HCT116 (cell line): ENCODE measurements at regions of chr9 and their contacts with region 1.

Region 1: DNA sequence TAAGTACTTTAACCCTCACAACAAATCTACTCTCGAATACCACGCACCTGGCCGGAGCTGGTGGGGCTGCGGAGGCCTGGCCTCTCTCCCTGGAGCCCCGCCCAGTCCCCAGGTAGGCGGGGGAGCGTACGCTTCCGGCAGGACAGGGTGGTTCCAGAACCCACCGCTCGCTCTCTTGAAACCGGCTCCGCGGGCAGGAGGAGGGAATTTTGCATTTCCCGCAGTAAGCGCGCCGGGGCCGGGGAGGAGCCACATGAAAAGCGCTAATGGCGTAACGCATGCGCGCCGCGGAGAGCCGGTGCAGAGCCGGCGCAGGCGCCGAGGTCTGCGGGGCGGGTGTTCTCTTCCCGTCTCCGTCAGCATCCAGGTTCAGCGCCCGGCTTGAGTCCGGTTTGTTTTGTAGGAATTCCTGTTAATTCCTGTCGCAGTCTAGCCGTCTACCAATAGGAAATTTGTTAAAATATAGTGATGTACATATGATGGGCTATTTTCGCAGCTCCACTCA is 20.8 kb downstream of the CAVIN4 start:
- DNase-seq: peak; percentile 75
- ATAC-seq: peak; percentile 89
- H3K4me3 ChIP-seq: peak overlapping the region; percentile 41 to 55
- H3K27ac ChIP-seq: peak overlapping the region; percentile 16
- H3K4me1 ChIP-seq: peaks cover 12 to 30% of the 10 kb centered on the region in 2 experiments
- H3K27me3 ChIP-seq: no peaks in the 10 kb centered on the region
- CTCF ChIP-seq: no peak
- POLR2A ChIP-seq: peak; percentile 73
- RAD21 ChIP-seq: no peak

Region 2: DNA sequence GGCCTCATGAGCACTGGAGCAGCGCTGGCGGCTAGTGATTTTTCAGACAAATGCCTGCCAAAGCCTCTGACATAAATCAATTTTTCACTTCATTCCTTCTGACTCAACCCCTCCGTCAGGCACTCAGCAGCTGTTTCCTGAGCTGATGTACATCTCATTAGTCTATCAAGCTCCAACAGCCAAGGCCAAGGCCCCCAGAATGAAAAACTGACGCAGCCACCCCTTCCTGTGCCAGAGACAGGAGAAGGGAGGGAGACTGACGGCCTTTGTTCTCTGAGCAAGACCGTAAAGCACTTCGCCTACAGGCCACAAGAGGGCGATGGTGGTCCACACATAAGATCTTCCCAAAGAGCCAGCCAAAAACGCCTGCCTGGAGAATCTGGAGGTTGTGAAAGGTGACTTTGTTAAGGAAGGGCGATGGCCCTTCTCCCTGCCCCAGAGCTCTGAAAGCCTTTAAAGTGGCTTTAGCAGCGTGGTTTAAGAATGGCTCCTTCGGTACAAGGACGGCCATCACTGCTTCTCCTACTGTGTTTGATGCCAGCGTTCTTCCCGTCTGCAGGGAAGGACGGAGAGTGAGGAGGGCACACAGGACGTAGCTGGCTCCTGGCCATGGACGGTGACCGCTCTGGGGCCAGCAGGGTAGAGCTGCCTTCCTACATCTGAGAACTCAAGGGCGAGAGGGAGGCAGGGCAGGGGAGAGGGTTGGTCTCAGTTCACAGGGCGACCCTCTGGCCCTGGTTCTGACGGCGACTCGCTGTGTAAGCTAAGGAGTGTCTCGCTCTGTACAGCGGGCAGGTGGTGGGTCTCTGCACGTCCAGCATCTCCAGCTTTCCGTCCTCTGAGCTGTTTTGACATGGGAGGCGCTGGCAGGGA is 1414.0 kb before region 1 on chr9:
- CTCF ChIA-PET with region 1: no interaction called
- POLR2A ChIA-PET with region 1: no interaction called
- RAD21 ChIA-PET with region 1: no interaction called
- intact Hi-C with region 1: loop called (anchors 1 kb)
- DNase-seq: peak; percentile 74
- ATAC-seq: peak; percentile 94
- H3K4me3 ChIP-seq: no peak overlapping the region
- H3K27ac ChIP-seq: no peak overlapping the region
- H3K4me1 ChIP-seq: peaks cover 0 to 4% of the 10 kb centered on the region in 2 experiments; a peak in 1 of 4 replicates
- H3K27me3 ChIP-seq: peaks cover 6% of the 10 kb centered on the region; the same call in 1 of the 2 replicates
- CTCF ChIP-seq: peak; percentile 66 to 94 (median 91)
- POLR2A ChIP-seq: no peak
- RAD21 ChIP-seq: peak; percentile 88

Region 3: DNA sequence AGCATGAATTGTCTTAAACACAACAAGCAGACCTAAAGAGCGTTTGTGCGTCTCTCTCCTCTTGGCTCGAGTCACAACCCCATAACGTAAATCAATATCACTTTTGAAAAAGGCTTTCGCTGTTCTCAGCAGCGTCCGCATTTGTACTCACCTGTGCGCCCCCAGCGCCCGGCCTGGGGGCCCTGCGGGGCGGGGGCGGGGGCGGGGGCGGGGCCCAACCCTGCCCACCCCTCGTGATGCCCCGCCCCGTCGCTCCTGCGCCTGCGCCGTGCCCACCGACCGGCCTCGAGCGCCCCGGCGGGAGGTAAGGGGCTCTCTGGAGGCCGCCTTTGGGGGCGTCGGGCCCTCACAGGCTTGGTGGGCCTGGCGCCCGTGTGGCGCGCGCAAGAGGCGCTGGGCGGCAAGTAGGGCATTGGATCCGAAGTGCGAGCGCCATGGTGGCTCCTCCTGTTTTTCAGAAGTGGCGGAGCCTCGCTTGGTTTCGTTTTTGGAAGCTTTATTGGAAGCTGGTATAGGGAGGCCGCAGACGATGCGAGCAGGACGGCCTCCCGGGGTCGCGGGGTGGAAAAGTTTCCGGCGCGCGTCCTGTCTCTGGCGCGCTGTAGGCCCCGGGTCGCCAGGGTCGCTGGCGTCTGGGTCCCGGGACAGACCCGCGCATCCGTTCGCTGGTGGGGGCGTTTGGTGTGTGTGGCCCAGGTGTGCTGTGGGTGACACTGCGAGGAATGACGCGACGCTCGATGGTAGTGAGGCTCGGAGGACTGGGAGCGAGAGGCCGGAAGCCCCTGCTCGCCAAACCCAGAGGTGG is 692.1 kb before region 1 on chr9 and contains the start of gene STX17:
- CTCF ChIA-PET with region 1: no interaction called
- POLR2A ChIA-PET with region 1: no interaction called
- RAD21 ChIA-PET with region 1: no interaction called
- intact Hi-C with region 1: loop called (anchors 5 kb)
- DNase-seq: peak; percentile 54
- ATAC-seq: peak; percentile 85
- H3K4me3 ChIP-seq: peak within 1 kb of the TSS; percentile 68 to 82
- H3K27ac ChIP-seq: peak within 1 kb of the TSS; percentile 79
- H3K4me1 ChIP-seq: peaks cover 3 to 16% of the 10 kb centered on the region in 2 experiments; a peak in 3 of 4 replicates
- H3K27me3 ChIP-seq: no peaks in the 10 kb centered on the region
- CTCF ChIP-seq: no peak
- POLR2A ChIP-seq: peak; percentile 70
- RAD21 ChIP-seq: no peak
- total RNA-seq, gene STX17: 24.6 TPM

Region 4: GRCh38 chr9:100322954-100323536 is 275.6 kb before region 1 on chr9:
- CTCF ChIA-PET with region 1: interaction called, 9 read pairs
- POLR2A ChIA-PET with region 1: no interaction called
- RAD21 ChIA-PET with region 1: no interaction called
- intact Hi-C with region 1: loop called (anchors 5 kb)
- DNase-seq: peak; percentile 10
- ATAC-seq: no peak; the same call in 1 of the 2 replicates
- H3K4me3 ChIP-seq: no peak overlapping the region
- H3K27ac ChIP-seq: no peak overlapping the region
- H3K4me1 ChIP-seq: no peaks in the 10 kb centered on the region
- H3K27me3 ChIP-seq: no peaks in the 10 kb centered on the region
- CTCF ChIP-seq: peak; percentile 39 to 79 (median 69); a peak in 5 of 6 replicates
- POLR2A ChIP-seq: no peak
- RAD21 ChIP-seq: peak; percentile 41

Region 5: GRCh38 chr9:100700689-100701318 is 102.1 kb after region 1 on chr9:
- CTCF ChIA-PET with region 1: interaction called, 11 read pairs
- POLR2A ChIA-PET with region 1: no interaction called
- RAD21 ChIA-PET with region 1: no interaction called
- intact Hi-C with region 1: no loop called
- DNase-seq: peak; percentile 32
- ATAC-seq: peak; percentile 88
- H3K4me3 ChIP-seq: no peak overlapping the region
- H3K27ac ChIP-seq: no peak overlapping the region
- H3K4me1 ChIP-seq: no peaks in the 10 kb centered on the region
- H3K27me3 ChIP-seq: 0 out of 2 replicates have a peak, but pooled peaks cover 3% of the 10 kb centered on the region
- CTCF ChIP-seq: peak; percentile 45 to 83 (median 60); a peak in 5 of 6 replicates
- POLR2A ChIP-seq: no peak
- RAD21 ChIP-seq: peak; percentile 61

Region 6: DNA sequence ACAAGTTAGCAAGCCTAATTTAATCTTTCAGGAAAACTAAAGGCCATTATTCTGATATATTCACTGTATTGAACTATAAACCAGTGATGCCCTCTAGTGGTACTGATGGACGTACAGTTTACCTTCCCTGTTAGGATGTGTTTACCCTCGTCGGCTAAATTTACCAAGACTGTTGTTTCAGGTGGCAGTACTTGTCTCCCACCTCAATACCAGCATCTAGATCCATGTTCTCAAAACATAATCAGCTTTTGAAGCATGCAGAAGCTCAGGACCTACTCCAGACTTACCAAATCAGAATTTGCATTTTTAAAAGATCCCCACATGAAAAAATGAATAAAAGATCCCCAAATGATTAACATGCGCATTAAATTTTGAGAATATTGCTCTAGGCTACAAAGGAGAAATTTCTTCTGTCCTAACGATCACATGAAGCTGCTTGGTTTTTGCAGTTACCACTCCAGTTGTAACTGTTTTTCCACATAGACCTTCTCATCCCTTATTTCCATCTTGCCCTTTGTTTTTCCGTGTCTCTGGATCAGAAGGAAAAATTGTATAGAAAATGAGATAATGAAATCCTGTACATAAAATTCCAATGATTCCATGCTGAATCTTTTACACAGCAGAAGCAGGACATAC is 789.3 kb after region 1 on chr9:
- CTCF ChIA-PET with region 1: interaction called, 11 read pairs
- POLR2A ChIA-PET with region 1: no interaction called
- RAD21 ChIA-PET with region 1: no interaction called
- intact Hi-C with region 1: no loop called
- DNase-seq: peak; percentile 58
- ATAC-seq: peak; percentile 97
- H3K4me3 ChIP-seq: no peak overlapping the region
- H3K27ac ChIP-seq: no peak overlapping the region
- H3K4me1 ChIP-seq: no peaks in the 10 kb centered on the region
- H3K27me3 ChIP-seq: no peaks in the 10 kb centered on the region
- CTCF ChIP-seq: peak; percentile 45 to 75 (median 70); a peak in 5 of 6 replicates
- POLR2A ChIP-seq: no peak
- RAD21 ChIP-seq: peak; percentile 47